PC-9 (cell line): ENCODE measurements at regions of chr6 and their contacts with region 1.

Region 1: DNA sequence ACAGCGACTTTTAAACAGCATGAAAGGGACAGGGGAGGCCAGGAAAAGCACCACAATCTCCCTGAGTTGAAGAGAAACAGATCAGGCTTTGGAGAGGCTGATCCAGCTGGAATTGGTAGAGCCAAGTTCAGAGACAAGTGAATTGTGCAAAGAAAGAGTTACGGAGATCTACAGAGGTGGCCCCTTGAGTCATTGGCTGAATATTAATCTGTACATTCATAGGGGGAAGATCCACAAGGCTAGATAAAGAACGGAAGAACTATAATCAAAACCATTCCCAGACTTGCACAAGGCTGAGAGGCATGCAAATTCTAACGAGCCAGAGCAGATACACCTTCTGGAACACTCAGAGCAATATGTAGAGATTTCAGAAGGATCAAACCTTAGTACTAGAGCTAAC is 14.2 kb upstream of the FOXQ1 start:
- DNase-seq: no peak
- H3K4me3 ChIP-seq: no peak overlapping the region
- H3K27ac ChIP-seq: no peak overlapping the region
- H3K4me1 ChIP-seq: peaks cover 6% of the 10 kb centered on the region; the same call in 1 of the 2 replicates
- H3K27me3 ChIP-seq: no peaks in the 10 kb centered on the region
- CTCF ChIP-seq: no peak

Region 2: GRCh38 chr6:1015825-1016224 is 281.9 kb before region 1 on chr6:
- CTCF ChIA-PET with region 1: no interaction called
- POLR2A ChIA-PET with region 1: interaction called, 10 read pairs
- intact Hi-C with region 1: no loop called
- DNase-seq: no peak
- H3K4me3 ChIP-seq: no peak overlapping the region
- H3K27ac ChIP-seq: no peak overlapping the region
- H3K4me1 ChIP-seq: no peaks in the 10 kb centered on the region
- H3K27me3 ChIP-seq: no peaks in the 10 kb centered on the region
- CTCF ChIP-seq: no peak